A673 (cell line): ENCODE measurements at regions of chr9 and their contacts with region 1.

Region 1: GRCh38 chr9:107222020-107222522 is 61.0 kb upstream of the RAD23B start:
- DNase-seq: no peak
- H3K4me3 ChIP-seq: no peak overlapping the region
- H3K27ac ChIP-seq: no peak overlapping the region
- H3K4me1 ChIP-seq: no peaks in the 10 kb centered on the region
- H3K27me3 ChIP-seq: no peaks in the 10 kb centered on the region
- CTCF ChIP-seq: no peak

Region 2: GRCh38 chr9:106799146-106799545 is 422.9 kb before region 1 on chr9:
- CTCF ChIA-PET with region 1: interaction called, 10 read pairs
- POLR2A ChIA-PET with region 1: no interaction called
- intact Hi-C with region 1: no loop called
- DNase-seq: peak; percentile 6
- H3K4me3 ChIP-seq: no peak overlapping the region
- H3K27ac ChIP-seq: no peak overlapping the region
- H3K4me1 ChIP-seq: no peaks in the 10 kb centered on the region
- H3K27me3 ChIP-seq: no peaks in the 10 kb centered on the region
- CTCF ChIP-seq: no peak

Region 3: GRCh38 chr9:107833301-107833700 is 611.2 kb after region 1 on chr9:
- CTCF ChIA-PET with region 1: no interaction called
- POLR2A ChIA-PET with region 1: no interaction called
- intact Hi-C with region 1: no loop called
- DNase-seq: no peak
- H3K4me3 ChIP-seq: no peak overlapping the region
- H3K27ac ChIP-seq: no peak overlapping the region
- H3K4me1 ChIP-seq: no peaks in the 10 kb centered on the region
- H3K27me3 ChIP-seq: no peaks in the 10 kb centered on the region
- CTCF ChIP-seq: no peak